Adrenal gland (tissue), 19 donors: ENCODE measurements at regions of chr13 and their contacts with region 1.

Region 1: DNA sequence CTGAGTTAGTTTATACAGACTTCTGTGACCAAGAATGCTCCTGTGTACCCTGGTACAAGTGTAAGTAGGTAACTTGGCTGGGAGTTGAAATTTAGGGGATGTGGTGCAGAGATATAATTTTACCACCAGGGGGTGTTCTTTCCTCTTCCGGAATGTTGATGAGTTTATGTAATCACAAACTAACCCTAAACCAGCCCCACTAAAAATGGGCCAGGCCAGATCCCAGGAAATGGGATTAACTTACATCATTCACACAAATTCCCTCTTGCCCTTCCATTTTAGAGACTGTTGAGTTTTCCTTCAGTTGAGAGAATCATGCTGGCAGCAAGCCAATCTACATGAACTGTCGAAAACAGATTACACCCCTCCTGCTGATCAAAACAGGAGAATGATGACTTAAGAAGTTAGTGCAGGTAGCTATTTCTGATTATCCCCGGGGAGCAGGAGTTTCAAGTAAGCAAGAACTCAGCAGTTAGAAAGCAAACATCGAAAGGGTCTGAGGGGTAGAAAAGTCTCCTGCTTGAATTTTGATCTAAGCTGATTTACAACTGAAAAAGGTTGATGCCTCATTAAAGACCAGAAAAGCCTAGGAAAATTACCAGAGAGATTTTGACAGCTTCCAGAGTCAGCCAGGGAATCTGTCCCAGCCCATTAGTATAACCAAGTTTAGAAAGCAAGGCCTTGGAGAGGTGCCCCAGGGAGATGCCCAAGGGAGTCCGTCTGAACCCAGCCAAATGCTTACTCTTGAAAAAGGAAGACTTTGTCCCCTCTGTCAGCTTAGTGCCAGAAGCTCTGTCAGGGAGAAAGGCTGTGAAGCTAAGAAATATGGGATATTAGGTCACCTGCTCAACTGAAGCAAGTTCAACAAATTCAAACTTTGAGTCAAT is 32.3 kb upstream of the MED4 start:
- DNase-seq: peak; percentile 24 to 67 (median 34)
- H3K4me3 ChIP-seq: no peak overlapping the region
- H3K27ac ChIP-seq: peak overlapping the region in 3 of 5 donors; percentile 32 to 88 (median 58)
- H3K4me1 ChIP-seq: peaks cover 4 to 16% of the 10 kb centered on the region in 2 donors
- H3K27me3 ChIP-seq: no peaks in the 10 kb centered on the region
- CTCF ChIP-seq: peak; percentile 69 to 82 (median 76)
- POLR2A ChIP-seq: no peak

Region 2: DNA sequence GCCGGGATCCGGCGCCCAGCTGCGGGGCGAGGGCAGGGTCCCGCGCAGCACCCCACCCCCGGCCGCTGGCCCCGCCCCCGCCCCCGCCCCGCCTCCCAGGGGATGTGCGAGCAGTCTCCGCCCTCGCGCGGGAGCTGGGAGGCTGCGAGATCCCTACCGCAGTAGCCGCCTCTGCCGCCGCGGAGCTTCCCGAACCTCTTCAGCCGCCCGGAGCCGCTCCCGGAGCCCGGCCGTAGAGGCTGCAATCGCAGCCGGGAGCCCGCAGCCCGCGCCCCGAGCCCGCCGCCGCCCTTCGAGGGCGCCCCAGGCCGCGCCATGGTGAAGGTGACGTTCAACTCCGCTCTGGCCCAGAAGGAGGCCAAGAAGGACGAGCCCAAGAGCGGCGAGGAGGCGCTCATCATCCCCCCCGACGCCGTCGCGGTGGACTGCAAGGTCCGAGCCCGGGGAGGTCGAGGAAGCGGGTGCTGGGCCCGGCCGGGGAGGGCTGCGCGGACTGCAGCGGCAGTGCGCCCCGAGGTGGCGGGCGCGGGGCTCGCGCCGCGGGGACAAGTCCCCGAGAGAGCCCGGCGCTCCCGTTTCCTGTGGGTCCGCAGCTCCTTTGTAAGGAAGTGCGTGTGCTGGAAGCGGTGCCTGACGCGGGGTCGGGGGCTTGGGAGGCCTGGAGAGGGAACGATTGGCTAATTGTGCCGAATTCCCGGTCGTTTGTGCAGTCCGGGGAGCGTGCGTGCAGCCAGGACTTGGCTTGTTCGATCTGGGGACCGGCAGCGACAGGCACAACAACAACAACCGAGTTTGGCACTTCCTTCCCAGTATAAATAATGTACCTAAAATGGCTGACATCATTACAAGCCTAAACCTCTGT is 106.1 kb after region 1 on chr13 and contains the start of gene ITM2B:
- intact Hi-C with region 1: loop called in 1 of 2 experiments (anchors 10 kb)
- DNase-seq: peak; percentile 77 to 88 (median 85)
- H3K4me3 ChIP-seq: peak within 1 kb of the TSS; percentile 36 to 100 (median 96)
- H3K27ac ChIP-seq: peak within 1 kb of the TSS; percentile 94 to 100 (median 99)
- H3K4me1 ChIP-seq: peaks cover 41 to 49% of the 10 kb centered on the region in 2 donors
- H3K27me3 ChIP-seq: no peaks in the 10 kb centered on the region
- CTCF ChIP-seq: peak in 5 of 6 experiments; percentile 21 to 44 (median 41)
- POLR2A ChIP-seq: peak; percentile 89 to 93
- total RNA-seq, gene ITM2B: 381 to 935 (median 735) TPM

Region 3: GRCh38 chr13:48303359-48304142 is 176.4 kb after region 1 on chr13 and contains the start of gene RB1:
- intact Hi-C with region 1: loop called in 1 of 2 experiments (anchors 10 kb)
- DNase-seq: peak; percentile 91 to 96 (median 95)
- H3K4me3 ChIP-seq: peak within 1 kb of the TSS; percentile 89 to 97 (median 94)
- H3K27ac ChIP-seq: peak within 1 kb of the TSS; percentile 71 to 100 (median 100)
- H3K4me1 ChIP-seq: peaks cover 9 to 30% of the 10 kb centered on the region in 2 donors
- H3K27me3 ChIP-seq: no peaks in the 10 kb centered on the region
- CTCF ChIP-seq: peak in 2 of 6 experiments; percentile 2 to 23
- POLR2A ChIP-seq: peak; percentile 92 to 96
- total RNA-seq, gene RB1: 26.1 to 78.0 (median 49.7) TPM